MCF 10A (cell line): ENCODE measurements at regions of chr9 and their contacts with region 1.

Region 1: GRCh38 chr9:85212887-85213286 is 528.9 kb downstream of the AGTPBP1 start:
- DNase-seq: peak; percentile 66
- H3K4me3 Mint-ChIP-seq: no peak overlapping the region
- H3K27ac Mint-ChIP-seq: peak overlapping the region; percentile 43
- H3K4me1 Mint-ChIP-seq: peaks cover 22% of the 10 kb centered on the region
- H3K27me3 Mint-ChIP-seq: no peaks in the 10 kb centered on the region
- CTCF ChIP-seq: no peak

Region 2: DNA sequence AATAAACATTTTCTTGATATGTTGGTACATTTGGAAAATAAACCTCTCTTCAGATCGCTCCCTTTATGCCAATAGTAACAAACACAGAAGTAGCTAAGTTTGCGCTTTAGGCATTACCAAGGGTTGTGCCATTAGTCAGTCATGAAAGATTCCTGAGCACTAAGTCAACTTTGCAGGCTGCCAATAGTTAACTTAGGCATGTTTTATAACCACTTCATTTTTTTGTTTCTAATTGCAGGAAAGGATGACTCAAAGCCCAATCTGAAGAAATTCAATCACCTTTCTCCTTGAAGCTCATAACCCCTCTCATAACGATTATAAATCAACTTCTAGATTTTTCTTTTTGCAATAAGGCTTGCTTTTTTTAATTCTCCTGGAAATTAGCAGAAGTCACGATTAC is 11.8 kb after region 1 on chr9:
- CTCF ChIA-PET with region 1: no interaction called
- POLR2A ChIA-PET with region 1: interaction called, 14 read pairs
- intact Hi-C with region 1: no loop called
- DNase-seq: peak; percentile 87
- H3K4me3 Mint-ChIP-seq: no peak overlapping the region
- H3K27ac Mint-ChIP-seq: peak overlapping the region; percentile 79
- H3K4me1 Mint-ChIP-seq: peaks cover 23% of the 10 kb centered on the region
- H3K27me3 Mint-ChIP-seq: no peaks in the 10 kb centered on the region
- CTCF ChIP-seq: no peak